ENCODE measurements at regions of chr1 and their contacts with region 1.

Region 1: DNA sequence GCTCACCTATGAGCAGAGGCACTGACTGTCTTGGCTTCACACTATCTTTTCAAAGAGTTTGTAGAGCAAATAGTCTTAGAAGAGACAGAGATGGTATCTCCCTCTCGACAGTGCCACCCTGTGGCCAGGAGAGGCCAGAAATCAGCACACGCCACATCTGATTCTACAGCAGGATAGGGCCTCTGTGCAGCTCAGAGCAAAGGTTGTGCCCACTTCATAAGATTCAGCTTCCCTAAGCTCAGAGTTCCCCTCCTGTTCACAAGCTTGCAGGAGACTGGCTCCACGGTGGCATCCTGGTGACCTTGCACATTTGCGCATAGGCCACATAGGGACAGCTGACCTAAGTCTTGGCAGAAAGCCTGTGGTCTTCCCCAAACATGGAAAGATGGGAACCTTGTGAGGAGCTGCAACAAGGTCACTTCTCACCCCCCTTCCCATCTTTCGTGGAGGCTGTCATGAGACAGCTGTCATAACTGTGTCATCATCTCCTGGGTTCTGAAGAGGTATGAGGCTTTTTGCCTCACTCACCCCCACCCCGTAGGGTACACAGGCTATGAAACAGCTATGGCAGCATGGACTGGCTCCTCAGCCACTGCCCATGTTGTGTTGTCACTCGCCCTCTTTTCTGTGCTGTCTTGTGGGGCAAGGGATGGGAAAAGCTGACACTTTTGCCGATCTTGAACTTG is 3.0 kb downstream of the ITLN2 start:
- DNase-seq: peak; percentile 82
- H3K4me3 Mint-ChIP-seq: no peak overlapping the region
- H3K27ac Mint-ChIP-seq: peak overlapping the region; percentile 3
- H3K4me1 Mint-ChIP-seq: peaks cover 55% of the 10 kb centered on the region
- H3K27me3 Mint-ChIP-seq: no peaks in the 10 kb centered on the region
- CTCF ChIP-seq: peak; percentile 93

Region 2: DNA sequence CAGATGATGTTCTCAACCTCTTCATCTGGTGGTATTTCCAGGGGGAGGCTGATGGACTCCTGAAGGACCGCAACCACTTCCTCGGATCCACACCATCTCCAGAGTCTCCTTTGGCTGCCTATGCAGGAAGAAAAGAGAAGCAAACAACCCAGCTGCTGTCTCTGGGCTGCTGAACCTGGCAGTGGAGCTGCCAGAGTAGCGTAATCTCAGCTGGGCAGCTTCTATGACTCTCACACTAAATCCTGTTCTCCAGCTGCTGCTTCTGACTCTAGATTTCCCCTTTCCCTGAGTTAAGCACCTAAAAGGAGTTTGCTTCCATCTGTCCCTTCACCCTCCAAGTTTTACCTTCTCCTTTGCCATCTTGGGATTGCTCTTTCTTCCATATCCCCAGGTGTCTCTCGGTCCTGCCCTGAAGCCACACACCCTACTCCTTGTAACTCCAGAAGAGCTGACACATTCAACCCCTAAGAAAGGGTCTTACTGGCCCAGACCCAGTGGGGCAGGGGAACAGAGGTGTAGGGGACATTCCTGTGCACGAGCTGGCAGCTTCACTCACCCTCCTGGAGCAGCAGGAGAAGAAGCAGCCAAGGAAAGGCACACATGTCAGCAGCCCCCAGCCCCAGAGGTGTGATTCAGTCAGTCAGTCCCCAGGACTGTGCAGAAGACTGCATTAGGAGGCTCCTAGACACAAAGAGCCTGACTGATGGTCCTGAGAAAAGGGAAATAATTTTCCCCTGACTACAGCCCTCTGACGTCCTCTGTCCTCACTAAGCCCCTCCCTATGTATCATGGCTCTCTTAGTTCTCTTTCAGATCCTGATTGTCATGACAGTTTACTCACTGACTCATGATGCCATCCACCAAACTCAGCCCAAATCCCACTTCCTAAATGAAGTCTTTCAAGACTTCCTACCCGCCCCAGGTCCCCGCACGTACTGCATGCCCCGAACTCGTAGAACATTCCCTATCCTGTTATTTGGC is 997.8 kb before region 1 on chr1 and contains the start of gene SLAMF9:
- CTCF ChIA-PET with region 1: no interaction called
- POLR2A ChIA-PET with region 1: no interaction called
- intact Hi-C with region 1: no loop called
- DNase-seq: peak; percentile 23
- H3K4me3 Mint-ChIP-seq: no peak within 1 kb of the TSS
- H3K27ac Mint-ChIP-seq: no peak within 1 kb of the TSS
- H3K4me1 Mint-ChIP-seq: peaks cover 25% of the 10 kb centered on the region
- H3K27me3 Mint-ChIP-seq: no peaks in the 10 kb centered on the region
- CTCF ChIP-seq: no peak
- total RNA-seq, gene SLAMF9: not detected in 2 replicates

Region 3: GRCh38 chr1:160681067-160681890 is 270.3 kb before region 1 on chr1:
- CTCF ChIA-PET with region 1: interaction called, 32 read pairs
- POLR2A ChIA-PET with region 1: interaction called, 4 read pairs
- intact Hi-C with region 1: loop called (anchors 1 kb)
- DNase-seq: peak; percentile 85
- H3K4me3 Mint-ChIP-seq: no peak overlapping the region
- H3K27ac Mint-ChIP-seq: no peak overlapping the region
- H3K4me1 Mint-ChIP-seq: no peaks in the 10 kb centered on the region
- H3K27me3 Mint-ChIP-seq: peaks cover 24% of the 10 kb centered on the region
- CTCF ChIP-seq: peak; percentile 84

Region 4: DNA sequence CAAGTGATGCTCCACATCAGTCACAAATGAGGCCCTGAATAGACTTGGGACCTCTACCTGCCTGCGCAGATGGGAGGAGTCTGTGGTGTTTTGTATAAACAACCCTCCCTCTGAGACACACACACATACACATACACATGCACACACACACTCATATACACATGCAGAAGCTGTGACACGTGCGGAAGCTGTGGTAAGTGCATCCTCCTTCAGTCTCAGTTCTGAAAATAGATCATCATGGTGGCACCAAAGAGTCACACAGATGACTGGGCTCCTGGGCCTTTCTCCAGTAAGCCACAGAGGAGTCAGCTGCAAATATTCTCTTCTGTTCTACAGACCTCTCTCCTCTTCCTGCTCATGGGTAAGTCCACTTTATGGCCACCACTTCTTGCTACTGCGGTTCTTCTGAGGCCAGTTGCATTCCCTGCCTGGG is 155.6 kb before region 1 on chr1 and contains the start of gene LY9:
- CTCF ChIA-PET with region 1: interaction called, 12 read pairs
- POLR2A ChIA-PET with region 1: interaction called, 7 read pairs
- intact Hi-C with region 1: no loop called
- DNase-seq: no peak
- H3K4me3 Mint-ChIP-seq: no peak within 1 kb of the TSS
- H3K27ac Mint-ChIP-seq: no peak within 1 kb of the TSS
- H3K4me1 Mint-ChIP-seq: peaks cover 7% of the 10 kb centered on the region
- H3K27me3 Mint-ChIP-seq: no peaks in the 10 kb centered on the region
- CTCF ChIP-seq: no peak
- total RNA-seq, gene LY9: not detected in 2 replicates

Region 5: GRCh38 chr1:160935527-160936258 is 15.9 kb before region 1 on chr1:
- CTCF ChIA-PET with region 1: interaction called, 62 read pairs
- POLR2A ChIA-PET with region 1: interaction called, 3 read pairs
- intact Hi-C with region 1: no loop called
- DNase-seq: no peak
- H3K4me3 Mint-ChIP-seq: no peak overlapping the region
- H3K27ac Mint-ChIP-seq: no peak overlapping the region
- H3K4me1 Mint-ChIP-seq: no peaks in the 10 kb centered on the region
- H3K27me3 Mint-ChIP-seq: peaks cover 41% of the 10 kb centered on the region
- CTCF ChIP-seq: no peak

Region 6: GRCh38 chr1:160987359-160988062 is 35.9 kb after region 1 on chr1:
- CTCF ChIA-PET with region 1: interaction called, 130 read pairs
- POLR2A ChIA-PET with region 1: interaction called, 35 read pairs
- intact Hi-C with region 1: no loop called
- DNase-seq: no peak
- H3K4me3 Mint-ChIP-seq: no peak overlapping the region
- H3K27ac Mint-ChIP-seq: no peak overlapping the region
- H3K4me1 Mint-ChIP-seq: no peaks in the 10 kb centered on the region
- H3K27me3 Mint-ChIP-seq: no peaks in the 10 kb centered on the region
- CTCF ChIP-seq: no peak

Region 7: GRCh38 chr1:161071886-161072371 is 120.3 kb after region 1 on chr1:
- CTCF ChIA-PET with region 1: interaction called, 8 read pairs
- POLR2A ChIA-PET with region 1: interaction called, 23 read pairs
- intact Hi-C with region 1: no loop called
- DNase-seq: peak; percentile 73
- H3K4me3 Mint-ChIP-seq: peak overlapping the region; percentile 90
- H3K27ac Mint-ChIP-seq: peak overlapping the region; percentile 46
- H3K4me1 Mint-ChIP-seq: peaks cover 51% of the 10 kb centered on the region
- H3K27me3 Mint-ChIP-seq: no peaks in the 10 kb centered on the region
- CTCF ChIP-seq: peak; percentile 87

Region 8: DNA sequence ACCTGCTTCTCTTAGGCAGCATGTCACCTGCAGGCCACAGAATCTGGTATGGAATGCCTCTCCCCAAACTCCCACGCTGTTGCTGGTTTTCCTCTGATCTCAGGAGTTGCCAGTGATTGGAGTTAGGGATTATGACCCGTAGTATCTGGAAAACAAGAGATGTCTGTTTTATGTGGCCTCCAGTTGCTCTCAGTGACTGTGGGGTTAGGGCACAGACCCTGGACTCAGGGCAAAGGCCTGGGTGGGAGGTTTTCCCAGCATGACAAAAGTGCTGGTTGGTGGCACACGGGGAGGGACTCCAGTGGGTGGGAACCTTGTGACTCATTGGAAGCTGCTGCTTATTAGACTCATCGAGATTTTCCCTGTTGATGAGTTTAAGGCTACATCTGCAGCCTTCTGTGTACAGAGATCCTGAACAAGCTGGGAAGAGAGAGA is 286.5 kb after region 1 on chr1 and contains the start of gene NR1I3:
- CTCF ChIA-PET with region 1: no interaction called
- POLR2A ChIA-PET with region 1: no interaction called
- intact Hi-C with region 1: no loop called
- DNase-seq: no peak
- H3K4me3 Mint-ChIP-seq: no peak within 1 kb of the TSS
- H3K27ac Mint-ChIP-seq: no peak within 1 kb of the TSS
- H3K4me1 Mint-ChIP-seq: peaks cover 11% of the 10 kb centered on the region
- H3K27me3 Mint-ChIP-seq: no peaks in the 10 kb centered on the region
- CTCF ChIP-seq: no peak
- total RNA-seq, gene NR1I3: not detected in 2 replicates

Measured in MCF 10A (cell line).